ENCODE measurements at regions of chr1 and their contacts with region 1.

Region 1: GRCh38 chr1:54715493-54716298 is at the start of gene TTC4:
- DNase-seq: peak; percentile 81
- H3K4me3 Mint-ChIP-seq: peak within 1 kb of the TSS; percentile 88
- H3K27ac Mint-ChIP-seq: peak within 1 kb of the TSS; percentile 88
- H3K4me1 Mint-ChIP-seq: peaks cover 29% of the 10 kb centered on the region
- H3K27me3 Mint-ChIP-seq: no peaks in the 10 kb centered on the region
- total RNA-seq, gene TTC4: 36.6 and 38.2 TPM in 2 replicates

Region 2: GRCh38 chr1:54764133-54764921 is 48.6 kb after region 1 on chr1 and contains the start of gene PARS2:
- intact Hi-C with region 1: loop called (anchors 1 kb)
- DNase-seq: peak; percentile 94
- H3K4me3 Mint-ChIP-seq: peak within 1 kb of the TSS; percentile 88
- H3K27ac Mint-ChIP-seq: peak within 1 kb of the TSS; percentile 89
- H3K4me1 Mint-ChIP-seq: peaks cover 12% of the 10 kb centered on the region
- H3K27me3 Mint-ChIP-seq: no peaks in the 10 kb centered on the region
- total RNA-seq, gene PARS2: 6.1 and 6.4 TPM in 2 replicates